Activated naive CD8-positive, alpha-beta T cell treated with anti-CD3 and anti-CD28 coated beads, Interleukin-2, amount 10 ng/mL, durations not matched to agents 7 days and 5 days (primary cell): ENCODE measurements at regions of chr12 and their contacts with region 1.

Region 1: DNA sequence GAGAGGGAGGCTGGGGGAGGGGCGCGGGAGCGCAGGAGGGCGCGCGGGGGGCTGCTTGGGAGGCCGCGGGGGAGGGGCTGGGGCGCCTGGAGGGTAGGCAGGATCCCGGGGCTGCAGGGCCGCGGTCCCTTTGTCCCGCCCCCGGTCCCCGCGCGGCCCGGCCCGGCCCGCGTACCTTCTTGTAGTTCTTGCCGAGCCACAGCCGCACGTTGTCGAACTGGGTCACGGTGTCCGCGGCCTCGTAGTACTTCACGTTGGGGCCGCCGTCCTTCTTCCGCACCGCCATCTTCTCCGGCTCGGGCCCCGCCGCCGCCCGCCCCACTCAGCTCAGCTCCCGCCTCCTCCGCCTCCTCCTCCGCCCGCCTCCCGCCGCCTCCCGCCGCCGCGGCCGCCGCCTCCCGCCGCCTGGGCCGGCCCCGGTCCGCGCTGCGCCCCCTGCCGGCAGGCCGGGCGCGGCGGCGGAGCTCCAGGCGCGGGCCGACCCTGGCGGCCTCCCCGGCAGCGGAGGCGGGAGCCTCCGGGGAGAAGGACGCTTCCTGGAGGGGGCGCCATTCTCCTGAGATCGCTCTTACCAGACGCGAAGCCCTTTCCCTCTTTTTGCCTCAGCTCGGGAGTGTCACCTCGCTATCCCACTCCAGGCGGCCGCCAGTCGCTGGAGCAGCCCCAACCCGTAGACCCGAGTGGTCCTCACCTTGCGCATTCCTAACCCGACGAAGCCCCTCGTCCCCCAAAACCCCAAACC is at the start of gene SMARCC2:
- DNase-seq: peak; percentile 94
- ATAC-seq: peak; percentile 87
- H3K4me3 Mint-ChIP-seq: peak within 1 kb of the TSS; percentile 99
- H3K27ac Mint-ChIP-seq: peak within 1 kb of the TSS; percentile 98
- H3K4me1 Mint-ChIP-seq: peaks cover 47% of the 10 kb centered on the region
- H3K27me3 Mint-ChIP-seq: peaks cover 2% of the 10 kb centered on the region
- total RNA-seq, gene SMARCC2: 162 to 174 TPM

Region 2: GRCh38 chr12:55982319-55982936 is 206.9 kb before region 1 on chr12:
- POLR2A ChIA-PET with region 1: no interaction called
- DNase-seq: no peak
- ATAC-seq: peak; percentile 56
- H3K4me3 Mint-ChIP-seq: no peak overlapping the region
- H3K27ac Mint-ChIP-seq: no peak overlapping the region
- H3K4me1 Mint-ChIP-seq: peaks cover 8% of the 10 kb centered on the region
- H3K27me3 Mint-ChIP-seq: no peaks in the 10 kb centered on the region

Region 3: GRCh38 chr12:56041552-56042429 is 147.6 kb before region 1 on chr12 and contains the start of gene RPS26:
- POLR2A ChIA-PET with region 1: interaction called, 11 read pairs
- DNase-seq: peak; percentile 85
- ATAC-seq: peak; percentile 94
- H3K4me3 Mint-ChIP-seq: peak within 1 kb of the TSS; percentile 93
- H3K27ac Mint-ChIP-seq: peak within 1 kb of the TSS; percentile 94
- H3K4me1 Mint-ChIP-seq: peaks cover 33% of the 10 kb centered on the region
- H3K27me3 Mint-ChIP-seq: no peaks in the 10 kb centered on the region
- total RNA-seq, gene RPS26: 39.1 to 42.6 TPM

Region 4: DNA sequence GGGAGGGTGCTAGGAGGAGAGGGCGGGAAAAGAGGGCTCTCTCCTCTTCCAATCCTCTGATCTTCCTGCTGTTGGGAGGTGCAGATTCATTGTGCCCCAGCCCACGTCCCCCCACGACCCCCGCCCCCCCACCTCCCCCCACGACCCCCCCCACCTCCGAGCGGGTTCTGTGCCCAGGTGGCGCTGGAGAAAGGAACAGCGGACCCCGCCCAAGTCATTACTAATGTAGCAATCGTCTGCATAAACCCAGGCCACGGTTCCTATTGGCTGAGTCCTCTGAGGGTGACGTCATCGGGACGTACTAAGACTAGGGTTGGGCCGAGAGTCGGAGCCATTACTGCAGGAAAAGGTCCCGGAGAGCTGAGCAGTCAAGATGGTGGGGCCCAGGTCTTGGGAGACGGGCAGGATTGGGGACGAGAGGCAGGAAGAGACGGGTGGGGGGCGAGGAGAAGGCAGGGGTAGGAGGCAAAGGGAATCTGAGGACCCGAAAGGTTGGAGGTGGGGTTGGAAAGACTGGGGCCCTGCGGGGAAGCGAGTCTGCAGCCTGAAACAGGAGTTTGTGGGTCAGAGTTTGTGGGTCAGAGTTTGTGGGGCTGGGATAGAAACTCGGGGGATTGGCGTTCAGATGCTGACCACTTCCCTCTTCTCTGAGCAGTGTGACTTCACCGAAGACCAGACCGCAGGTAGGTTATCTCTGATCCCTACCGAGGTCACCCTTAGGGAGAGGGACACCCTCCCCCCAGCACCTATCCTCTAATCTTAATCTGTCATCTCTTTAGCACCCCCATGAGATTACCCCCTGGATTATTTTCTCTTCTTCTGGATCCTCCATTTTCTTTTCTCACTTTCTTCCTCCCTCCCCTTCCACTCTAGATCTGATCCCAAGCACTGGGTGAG is 31.1 kb before region 1 on chr12 and contains the start of gene MYL6:
- POLR2A ChIA-PET with region 1: interaction called, 80 read pairs
- DNase-seq: peak; percentile 81
- ATAC-seq: peak; percentile 82
- H3K4me3 Mint-ChIP-seq: peak within 1 kb of the TSS; percentile 96
- H3K27ac Mint-ChIP-seq: peak within 1 kb of the TSS; percentile 97
- H3K4me1 Mint-ChIP-seq: peaks cover 38% of the 10 kb centered on the region
- H3K27me3 Mint-ChIP-seq: no peaks in the 10 kb centered on the region
- total RNA-seq, gene MYL6: 1,083 to 1,169 TPM

Region 5: GRCh38 chr12:56221527-56222387 is 32.4 kb after region 1 on chr12 and contains the start of gene RNF41:
- POLR2A ChIA-PET with region 1: interaction called, 34 read pairs
- DNase-seq: peak; percentile 92
- ATAC-seq: peak; percentile 83
- H3K4me3 Mint-ChIP-seq: peak within 1 kb of the TSS; percentile 96
- H3K27ac Mint-ChIP-seq: peak within 1 kb of the TSS; percentile 91
- H3K4me1 Mint-ChIP-seq: peaks cover 34% of the 10 kb centered on the region
- H3K27me3 Mint-ChIP-seq: no peaks in the 10 kb centered on the region
- total RNA-seq, gene RNF41: 36.1 to 38.1 TPM

Region 6: GRCh38 chr12:56248688-56249087 is 59.3 kb after region 1 on chr12:
- POLR2A ChIA-PET with region 1: no interaction called
- DNase-seq: no peak
- ATAC-seq: no peak
- H3K4me3 Mint-ChIP-seq: no peak overlapping the region
- H3K27ac Mint-ChIP-seq: no peak overlapping the region
- H3K4me1 Mint-ChIP-seq: peaks cover 5% of the 10 kb centered on the region
- H3K27me3 Mint-ChIP-seq: no peaks in the 10 kb centered on the region